BJ (cell line): ENCODE measurements at regions of chr21 and their contacts with region 1.

Region 1: GRCh38 chr21:31580866-31581276 is 78.6 kb upstream of the SOD1 start:
- DNase-seq: no peak
- H3K4me3 ChIP-seq: no peak overlapping the region
- H3K27me3 ChIP-seq: no peaks in the 10 kb centered on the region
- CTCF ChIP-seq: peak; percentile 85

Region 2: DNA sequence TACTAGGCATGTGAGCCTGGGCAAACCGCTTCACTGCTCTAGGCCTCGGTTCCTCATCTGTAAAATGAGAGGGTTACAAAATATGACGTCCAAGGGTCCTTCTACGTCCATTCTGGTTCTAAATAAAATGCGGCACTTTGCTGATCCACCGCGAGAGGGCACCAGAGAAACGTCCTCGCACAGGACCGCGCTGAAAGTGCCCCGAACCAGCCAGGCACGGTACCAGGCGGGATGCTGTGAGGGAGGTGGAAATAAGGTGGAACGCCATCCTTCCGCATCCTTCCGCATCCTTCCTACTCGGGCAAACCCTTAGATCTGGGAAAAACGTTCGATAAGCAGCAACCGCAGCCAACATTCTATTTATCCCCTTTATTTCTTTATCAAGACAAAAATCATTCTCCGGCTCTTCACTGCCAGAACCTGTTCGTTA is 482.3 kb before region 1 on chr21:
- CTCF ChIA-PET with region 1: interaction called, 15 read pairs
- POLR2A ChIA-PET with region 1: no interaction called
- DNase-seq: no peak
- H3K4me3 ChIP-seq: no peak overlapping the region
- H3K27me3 ChIP-seq: no peaks in the 10 kb centered on the region
- CTCF ChIP-seq: peak; percentile 89

Region 3: DNA sequence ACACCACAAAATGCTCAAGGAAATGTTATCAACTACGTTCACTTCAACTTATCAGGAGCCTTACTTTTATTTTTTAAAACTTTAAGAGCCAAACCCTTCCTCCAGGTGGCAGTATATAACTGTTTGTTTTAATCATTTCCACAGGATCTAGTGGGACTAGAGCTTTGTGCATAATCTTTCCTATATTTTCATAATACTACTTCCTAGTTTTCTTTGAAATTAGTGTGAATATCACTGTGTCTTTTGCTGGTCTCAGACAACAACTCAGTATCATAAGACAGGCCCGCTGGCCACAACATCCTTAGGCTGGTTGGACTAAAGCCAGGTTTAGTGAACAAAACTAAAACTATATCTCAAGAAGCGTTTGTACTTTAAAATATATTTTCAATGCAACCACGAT is 382.3 kb before region 1 on chr21:
- CTCF ChIA-PET with region 1: interaction called, 71 read pairs
- POLR2A ChIA-PET with region 1: no interaction called
- DNase-seq: no peak
- H3K4me3 ChIP-seq: no peak overlapping the region
- H3K27me3 ChIP-seq: no peaks in the 10 kb centered on the region
- CTCF ChIP-seq: peak; percentile 53

Region 4: GRCh38 chr21:31213795-31214194 is 367.1 kb before region 1 on chr21:
- CTCF ChIA-PET with region 1: interaction called, 10 read pairs
- POLR2A ChIA-PET with region 1: no interaction called
- DNase-seq: no peak
- H3K4me3 ChIP-seq: no peak overlapping the region
- H3K27me3 ChIP-seq: no peaks in the 10 kb centered on the region
- CTCF ChIP-seq: 0 out of 2 replicates have a peak, but pooled peaks have one; percentile 7

Region 5: DNA sequence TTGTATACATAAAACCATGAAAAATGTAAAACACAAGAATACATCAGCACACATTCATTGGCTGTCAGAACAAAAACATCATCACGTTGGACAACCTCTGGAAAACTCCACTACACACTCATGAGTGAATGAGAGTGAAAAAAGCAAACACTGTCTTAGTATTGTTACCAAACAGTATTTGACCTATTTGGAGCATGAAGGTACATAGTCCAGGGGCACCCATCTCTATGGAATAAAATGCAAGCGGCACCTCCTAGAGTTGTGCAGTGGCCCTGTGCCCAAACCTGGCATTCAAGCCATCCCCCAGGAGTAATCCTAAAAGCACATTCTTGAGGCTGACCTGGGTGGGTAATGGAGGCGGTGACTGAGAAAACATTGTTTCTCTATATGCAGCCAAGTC is 11.6 kb after region 1 on chr21:
- CTCF ChIA-PET with region 1: interaction called, 14 read pairs
- POLR2A ChIA-PET with region 1: interaction called, 4 read pairs
- DNase-seq: no peak
- H3K4me3 ChIP-seq: no peak overlapping the region
- H3K27me3 ChIP-seq: no peaks in the 10 kb centered on the region
- CTCF ChIP-seq: no peak

Region 6: GRCh38 chr21:32083197-32083596 is 502.3 kb after region 1 on chr21:
- CTCF ChIA-PET with region 1: no interaction called
- POLR2A ChIA-PET with region 1: no interaction called
- DNase-seq: no peak
- H3K4me3 ChIP-seq: no peak overlapping the region
- H3K27me3 ChIP-seq: no peaks in the 10 kb centered on the region
- CTCF ChIP-seq: no peak